ENCODE measurements at regions of chr10 and their contacts with region 1.

Region 1: DNA sequence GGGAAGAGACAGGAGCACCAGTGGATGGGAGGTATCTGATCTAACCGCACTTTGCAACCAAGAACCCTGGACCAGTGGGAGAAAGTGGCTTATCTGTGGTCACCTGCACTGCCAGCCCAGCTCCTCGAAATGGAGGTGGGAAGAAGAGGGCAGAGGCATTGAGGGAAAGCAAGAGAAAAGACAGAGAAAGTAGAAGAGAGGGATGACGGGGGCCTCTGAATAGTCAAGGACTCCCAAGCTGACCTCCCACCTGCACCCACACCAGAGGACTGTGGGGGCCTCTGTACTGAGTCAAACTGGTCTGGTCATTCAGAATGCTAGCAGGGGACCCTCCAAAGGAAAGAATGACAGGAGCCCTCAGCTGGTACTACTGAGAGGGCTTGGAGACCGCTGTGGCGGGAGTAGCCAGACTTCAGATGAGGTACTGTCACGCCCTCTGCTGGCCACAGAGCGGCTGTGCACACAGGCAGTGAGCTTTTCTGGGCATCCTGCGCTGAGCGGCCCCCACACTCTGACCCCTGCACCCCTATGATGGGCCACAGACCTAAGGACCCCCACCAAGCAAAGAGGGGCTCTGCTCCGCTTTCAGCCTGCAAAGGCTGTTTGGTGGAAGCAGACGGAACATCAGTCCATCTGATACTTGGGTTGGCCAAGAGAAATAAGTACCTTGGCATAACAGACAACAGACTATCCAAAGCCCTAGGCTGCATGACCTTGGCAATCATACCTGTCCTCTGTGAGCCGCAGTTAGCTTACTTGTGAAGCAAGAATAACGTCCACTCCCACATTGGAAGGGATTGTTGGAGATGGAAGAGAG is 112.9 kb downstream of the COL13A1 start:
- DNase-seq: peak; percentile 82
- ATAC-seq: peak; percentile 83
- H3K4me3 Mint-ChIP-seq: no peak overlapping the region
- H3K27ac Mint-ChIP-seq: no peak overlapping the region
- H3K4me1 Mint-ChIP-seq: no peaks in the 10 kb centered on the region
- H3K27me3 Mint-ChIP-seq: peaks cover 6% of the 10 kb centered on the region

Region 2: DNA sequence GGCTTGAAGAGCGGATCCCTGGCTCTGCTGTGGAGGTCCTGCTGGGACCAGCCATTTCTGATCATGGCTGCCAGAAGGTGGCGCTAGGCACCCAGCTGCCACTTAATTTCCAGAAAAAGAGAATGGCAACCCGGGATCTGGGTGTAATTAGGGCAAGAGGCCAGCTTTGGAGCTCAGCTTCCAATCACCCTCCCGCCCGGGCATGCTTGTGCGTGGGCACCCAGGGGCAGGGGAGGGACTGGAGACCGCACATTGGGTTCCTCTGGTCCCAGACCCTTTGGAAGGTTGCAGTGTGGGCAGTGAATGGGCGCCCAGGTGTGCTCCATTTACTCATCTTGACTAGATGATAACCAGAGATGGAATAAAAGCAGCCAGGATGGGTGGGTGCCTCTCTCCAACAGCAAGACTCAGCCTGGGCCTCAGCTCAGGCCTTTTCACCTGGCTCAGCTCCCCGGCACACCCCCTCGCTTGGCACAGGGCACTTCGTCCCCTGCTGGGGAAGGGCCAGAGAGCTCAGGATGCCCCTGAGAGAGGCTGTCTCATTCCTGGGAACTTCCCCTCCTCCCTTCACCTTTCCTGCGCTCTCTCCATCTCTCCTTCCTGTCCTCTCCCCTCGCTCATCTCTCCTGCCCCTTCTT is 269.8 kb before region 1 on chr10:
- CTCF ChIA-PET with region 1: interaction called, 9 read pairs
- POLR2A ChIA-PET with region 1: no interaction called
- intact Hi-C with region 1: loop called (anchors 1 to 10 kb)
- DNase-seq: peak; percentile 73
- ATAC-seq: peak; percentile 30
- H3K4me3 Mint-ChIP-seq: no peak overlapping the region
- H3K27ac Mint-ChIP-seq: no peak overlapping the region
- H3K4me1 Mint-ChIP-seq: no peaks in the 10 kb centered on the region
- H3K27me3 Mint-ChIP-seq: no peaks in the 10 kb centered on the region

Region 3: DNA sequence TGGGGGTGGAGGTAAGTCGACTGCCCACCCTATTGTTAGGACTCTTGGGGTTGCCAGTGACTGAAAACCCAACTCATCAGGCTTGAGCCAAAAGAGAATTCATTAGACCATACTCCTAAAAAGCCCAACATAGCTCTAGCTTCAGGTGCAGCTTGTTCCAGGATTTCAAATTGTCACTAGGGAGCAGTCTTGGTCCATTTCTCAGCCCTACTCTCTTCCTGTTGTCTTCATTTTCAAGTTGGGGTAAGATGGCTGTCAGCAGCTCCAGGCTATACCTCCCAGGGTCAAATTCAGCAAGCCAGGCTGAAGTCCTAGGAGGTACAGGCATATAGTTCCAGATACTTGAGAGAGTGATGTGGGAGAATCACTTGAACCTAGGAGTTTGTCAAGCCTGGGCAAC is 127.8 kb before region 1 on chr10:
- CTCF ChIA-PET with region 1: interaction called, 59 read pairs
- POLR2A ChIA-PET with region 1: no interaction called
- intact Hi-C with region 1: loop called (anchors 1 to 2 kb)
- DNase-seq: no peak
- ATAC-seq: no peak
- H3K4me3 Mint-ChIP-seq: no peak overlapping the region
- H3K27ac Mint-ChIP-seq: no peak overlapping the region
- H3K4me1 Mint-ChIP-seq: no peaks in the 10 kb centered on the region
- H3K27me3 Mint-ChIP-seq: peaks cover 12% of the 10 kb centered on the region

Region 4: GRCh38 chr10:69901628-69902505 is 12.7 kb before region 1 on chr10:
- CTCF ChIA-PET with region 1: interaction called, 18 read pairs
- POLR2A ChIA-PET with region 1: no interaction called
- intact Hi-C with region 1: no loop called
- DNase-seq: peak; percentile 41
- ATAC-seq: peak; percentile 33
- H3K4me3 Mint-ChIP-seq: no peak overlapping the region
- H3K27ac Mint-ChIP-seq: no peak overlapping the region
- H3K4me1 Mint-ChIP-seq: no peaks in the 10 kb centered on the region
- H3K27me3 Mint-ChIP-seq: no peaks in the 10 kb centered on the region

Measured in activated CD4-positive, alpha-beta T cell treated with anti-CD3 and anti-CD28 coated beads for 36 hours (primary cell).